Dendritic cell treated with granulocyte-macrophage colony-stimulating factor and Interleukin-4, amounts not matched to agents 40 ng/mL and 50 ng/mL, for 4 days (primary cell): ENCODE measurements at regions of chr11 and their contacts with region 1.

Region 1: GRCh38 chr11:11370255-11370961 is 17.4 kb upstream of the CSNK2A3 start:
- H3K4me3 Mint-ChIP-seq: peak overlapping the region; percentile 32
- H3K27ac Mint-ChIP-seq: peak overlapping the region; percentile 97
- H3K4me1 Mint-ChIP-seq: peaks cover 63% of the 10 kb centered on the region
- H3K27me3 Mint-ChIP-seq: peaks cover 8% of the 10 kb centered on the region

Region 2: GRCh38 chr11:11279956-11280689 is 90.3 kb before region 1 on chr11:
- intact Hi-C with region 1: no loop called
- H3K4me3 Mint-ChIP-seq: no peak overlapping the region
- H3K27ac Mint-ChIP-seq: peak overlapping the region; percentile 52
- H3K4me1 Mint-ChIP-seq: peaks cover 21% of the 10 kb centered on the region
- H3K27me3 Mint-ChIP-seq: peaks cover 22% of the 10 kb centered on the region

Region 3: GRCh38 chr11:11416502-11416901 is 46.1 kb after region 1 on chr11:
- intact Hi-C with region 1: loop called (anchors 5 kb)
- H3K4me3 Mint-ChIP-seq: no peak overlapping the region
- H3K27ac Mint-ChIP-seq: peak overlapping the region; percentile 70
- H3K4me1 Mint-ChIP-seq: peaks cover 96% of the 10 kb centered on the region
- H3K27me3 Mint-ChIP-seq: peaks cover 61% of the 10 kb centered on the region